Activated CD4-positive, alpha-beta T cell treated with anti-CD3 and anti-CD28 coated beads for 36 hours (primary cell): ENCODE measurements at regions of chr2 and their contacts with region 1.

Region 1: DNA sequence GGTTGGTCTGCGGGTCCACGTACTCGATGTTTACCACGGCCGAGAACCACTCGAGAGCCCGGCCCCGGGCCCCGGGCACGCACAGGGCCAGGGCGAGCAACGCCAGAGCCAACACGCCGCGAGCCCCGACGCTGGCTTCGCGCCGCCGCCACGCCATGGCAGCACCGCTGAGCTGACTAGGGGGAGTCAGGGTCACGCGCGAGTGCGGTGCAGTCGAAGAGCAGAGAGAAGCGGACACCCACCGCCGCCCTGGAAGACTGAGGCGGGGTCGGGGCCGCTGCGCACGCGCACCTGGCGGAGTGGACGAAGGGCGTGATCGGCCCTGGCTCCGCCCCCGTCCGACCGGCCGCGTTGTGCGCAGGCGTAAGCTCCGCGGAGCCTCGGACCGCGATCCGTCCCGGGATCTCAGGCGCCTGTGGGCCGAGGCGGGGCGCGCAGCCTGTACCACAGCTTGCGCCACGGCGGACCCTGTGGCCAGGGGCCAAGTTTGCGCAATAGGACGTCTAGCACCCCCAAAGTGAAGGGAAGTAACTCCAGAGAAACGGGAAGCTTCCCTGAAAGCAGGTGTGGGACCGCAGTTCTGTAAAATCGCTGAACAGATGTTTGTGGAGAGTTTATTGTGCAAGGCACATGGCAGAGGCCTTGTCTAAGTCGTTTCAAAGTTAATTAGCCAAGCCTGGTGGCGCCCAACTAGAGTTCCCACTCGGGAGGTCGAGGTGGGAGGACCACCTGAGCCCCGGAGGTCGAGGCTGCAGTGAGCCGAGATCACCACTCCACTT is at the start of gene RNF149:
- DNase-seq: peak; percentile 94
- ATAC-seq: peak; percentile 63
- H3K4me3 Mint-ChIP-seq: peak within 1 kb of the TSS; percentile 82
- H3K27ac Mint-ChIP-seq: peak within 1 kb of the TSS; percentile 98
- H3K4me1 Mint-ChIP-seq: peaks cover 67% of the 10 kb centered on the region
- H3K27me3 Mint-ChIP-seq: no peaks in the 10 kb centered on the region
- total RNA-seq, gene RNF149: 23.4 to 29.5 TPM

Region 2: GRCh38 chr2:100562732-100563720 is 745.6 kb before region 1 on chr2 and contains the start of gene PDCL3:
- CTCF ChIA-PET with region 1: no interaction called
- POLR2A ChIA-PET with region 1: no interaction called
- intact Hi-C with region 1: loop called in 1 of 2 experiments (anchors 5 kb)
- DNase-seq: peak; percentile 96
- ATAC-seq: peak; percentile 96
- H3K4me3 Mint-ChIP-seq: peak within 1 kb of the TSS; percentile 85
- H3K27ac Mint-ChIP-seq: peak within 1 kb of the TSS; percentile 97
- H3K4me1 Mint-ChIP-seq: peaks cover 26% of the 10 kb centered on the region
- H3K27me3 Mint-ChIP-seq: no peaks in the 10 kb centered on the region
- total RNA-seq, gene PDCL3: 39.3 to 41.9 TPM

Region 3: DNA sequence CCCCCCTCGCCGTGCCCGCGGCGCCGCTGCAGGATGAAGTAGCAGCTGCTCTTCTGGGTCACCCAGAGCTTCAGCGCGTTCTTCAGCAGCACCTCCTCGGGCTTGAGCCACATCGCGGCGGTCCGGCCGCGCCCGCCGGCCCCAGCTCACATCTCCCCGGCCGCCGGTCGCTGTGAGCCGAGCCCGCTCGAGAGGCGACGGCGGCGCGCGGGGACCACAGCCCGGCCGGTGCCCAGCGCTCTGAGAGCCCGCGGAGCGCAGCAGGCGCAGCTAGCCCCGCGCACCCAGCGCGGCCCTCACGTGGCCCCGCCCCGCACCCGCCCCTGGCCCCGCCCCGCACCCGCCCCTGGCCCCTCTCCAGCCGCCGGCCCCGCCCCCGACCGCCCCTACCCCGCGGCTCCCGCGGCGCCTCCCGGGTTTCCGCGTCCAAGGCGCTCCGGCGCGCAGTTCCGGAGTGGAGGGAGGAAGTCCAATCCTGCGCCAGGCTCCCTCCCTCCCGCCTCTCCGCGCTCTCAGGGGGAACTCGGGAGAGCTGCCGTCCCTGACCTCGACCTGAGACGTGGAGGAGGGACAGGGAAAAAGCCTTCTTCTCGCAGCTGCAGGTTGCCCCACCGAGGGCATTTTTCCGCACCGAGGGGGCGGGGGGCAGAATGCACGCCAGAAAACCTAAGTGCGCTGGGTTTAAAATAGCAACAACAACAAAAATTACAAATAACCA is 157.3 kb before region 1 on chr2 and contains the start of gene TBC1D8:
- CTCF ChIA-PET with region 1: no interaction called
- POLR2A ChIA-PET with region 1: no interaction called
- intact Hi-C with region 1: loop called in 1 of 2 experiments (anchors 1 kb)
- DNase-seq: peak; percentile 82
- ATAC-seq: peak; percentile 93
- H3K4me3 Mint-ChIP-seq: peak within 1 kb of the TSS; percentile 71
- H3K27ac Mint-ChIP-seq: peak within 1 kb of the TSS; percentile 55
- H3K4me1 Mint-ChIP-seq: peaks cover 24% of the 10 kb centered on the region
- H3K27me3 Mint-ChIP-seq: peaks cover 21% of the 10 kb centered on the region
- total RNA-seq, gene TBC1D8: 3.3 to 3.4 TPM

Region 4: DNA sequence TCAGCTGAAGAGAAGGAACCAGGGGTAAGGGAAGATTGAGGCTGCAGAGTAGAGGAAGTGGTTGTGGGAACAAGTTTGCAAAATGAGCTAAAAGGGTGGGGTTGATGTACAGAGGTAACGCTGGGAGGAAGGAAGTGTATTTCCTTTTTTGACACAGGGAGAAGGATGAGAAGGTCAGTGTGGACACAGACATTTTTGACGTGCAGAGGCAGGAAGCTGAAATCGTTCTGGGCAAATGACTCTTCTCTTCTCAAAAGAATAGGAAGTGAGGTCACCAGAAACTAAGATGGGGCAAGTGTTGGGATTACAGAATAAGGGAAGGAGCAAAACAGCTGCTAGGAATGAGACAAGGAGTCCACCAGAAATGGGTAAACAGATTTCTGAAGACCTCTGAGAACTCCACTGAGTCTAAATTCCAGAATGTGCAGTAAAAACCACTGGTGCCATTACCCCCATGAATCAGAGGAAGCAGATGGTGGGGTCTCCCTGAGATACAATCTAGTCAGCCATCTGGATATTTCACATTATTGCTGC is 19.9 kb after region 1 on chr2:
- CTCF ChIA-PET with region 1: interaction called, 4 read pairs
- POLR2A ChIA-PET with region 1: interaction called, 4 read pairs
- intact Hi-C with region 1: loop called (anchors 1 to 2 kb)
- DNase-seq: no peak
- ATAC-seq: peak; percentile 80
- H3K4me3 Mint-ChIP-seq: no peak overlapping the region
- H3K27ac Mint-ChIP-seq: no peak overlapping the region
- H3K4me1 Mint-ChIP-seq: peaks cover 20% of the 10 kb centered on the region
- H3K27me3 Mint-ChIP-seq: no peaks in the 10 kb centered on the region

Region 5: DNA sequence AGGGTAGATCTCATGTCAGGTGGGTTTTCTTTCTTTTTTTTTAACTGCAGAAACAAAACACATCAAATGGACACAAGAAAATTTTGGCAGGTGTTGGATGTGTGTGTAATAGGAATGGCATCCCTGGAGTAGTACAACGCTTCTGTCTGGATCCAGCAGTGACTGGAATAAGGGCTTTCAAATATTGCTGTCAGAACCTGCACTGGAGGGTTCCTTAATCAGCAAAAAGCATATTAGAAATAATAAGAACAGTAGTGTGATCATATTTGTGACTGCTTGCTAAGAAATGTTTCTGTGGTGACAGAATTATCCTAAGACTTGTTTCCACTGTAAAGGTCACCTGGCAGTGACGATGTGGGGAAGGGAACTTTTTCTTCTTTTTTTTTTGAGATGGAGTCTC is 47.9 kb after region 1 on chr2:
- CTCF ChIA-PET with region 1: no interaction called
- POLR2A ChIA-PET with region 1: no interaction called
- intact Hi-C with region 1: no loop called
- DNase-seq: no peak
- ATAC-seq: no peak
- H3K4me3 Mint-ChIP-seq: no peak overlapping the region
- H3K27ac Mint-ChIP-seq: no peak overlapping the region
- H3K4me1 Mint-ChIP-seq: peaks cover 14% of the 10 kb centered on the region
- H3K27me3 Mint-ChIP-seq: no peaks in the 10 kb centered on the region

Region 6: GRCh38 chr2:101387151-101387807 is 78.7 kb after region 1 on chr2 and contains the start of gene CREG2:
- CTCF ChIA-PET with region 1: no interaction called
- POLR2A ChIA-PET with region 1: no interaction called
- intact Hi-C with region 1: no loop called
- DNase-seq: peak; percentile 81
- ATAC-seq: peak; percentile 93
- H3K4me3 Mint-ChIP-seq: peak within 1 kb of the TSS; percentile 55
- H3K27ac Mint-ChIP-seq: no peak within 1 kb of the TSS
- H3K4me1 Mint-ChIP-seq: peaks cover 6% of the 10 kb centered on the region
- H3K27me3 Mint-ChIP-seq: peaks cover 34% of the 10 kb centered on the region
- total RNA-seq, gene CREG2: not detected

Region 7: GRCh38 chr2:101623031-101623521 is 314.5 kb after region 1 on chr2:
- CTCF ChIA-PET with region 1: no interaction called
- POLR2A ChIA-PET with region 1: no interaction called
- intact Hi-C with region 1: no loop called
- DNase-seq: no peak
- ATAC-seq: peak; percentile 67
- H3K4me3 Mint-ChIP-seq: peak overlapping the region; percentile 28
- H3K27ac Mint-ChIP-seq: peak overlapping the region; percentile 83
- H3K4me1 Mint-ChIP-seq: peaks cover 34% of the 10 kb centered on the region
- H3K27me3 Mint-ChIP-seq: no peaks in the 10 kb centered on the region

Region 8: GRCh38 chr2:101704046-101704466 is 395.4 kb after region 1 on chr2:
- CTCF ChIA-PET with region 1: no interaction called
- POLR2A ChIA-PET with region 1: no interaction called
- intact Hi-C with region 1: loop called (anchors 2 to 5 kb)
- DNase-seq: peak; percentile 54
- ATAC-seq: peak; percentile 18
- H3K4me3 Mint-ChIP-seq: peak overlapping the region; percentile 53
- H3K27ac Mint-ChIP-seq: peak overlapping the region; percentile 90
- H3K4me1 Mint-ChIP-seq: peaks cover 74% of the 10 kb centered on the region
- H3K27me3 Mint-ChIP-seq: no peaks in the 10 kb centered on the region

Region 9: DNA sequence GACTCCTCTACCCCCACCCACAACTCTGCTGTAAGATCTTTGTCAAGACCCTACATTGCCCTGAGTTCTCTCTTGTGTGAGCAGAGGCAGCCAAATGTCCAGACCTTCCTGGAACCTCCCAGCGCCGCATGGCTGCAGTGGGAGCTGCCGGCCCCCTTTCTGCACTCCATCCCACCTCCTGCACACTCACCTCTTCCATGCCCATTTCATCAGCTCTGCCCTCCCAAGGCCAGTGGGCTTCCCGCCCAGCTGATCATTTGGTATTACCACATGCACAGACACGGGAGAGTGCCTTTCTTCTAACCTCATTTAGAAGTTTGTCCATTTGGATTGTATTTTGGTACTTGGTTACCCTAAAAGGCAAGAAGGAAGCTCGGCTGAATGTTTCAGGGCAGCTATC is 685.2 kb after region 1 on chr2:
- CTCF ChIA-PET with region 1: no interaction called
- POLR2A ChIA-PET with region 1: no interaction called
- intact Hi-C with region 1: no loop called
- DNase-seq: no peak
- ATAC-seq: no peak
- H3K4me3 Mint-ChIP-seq: no peak overlapping the region
- H3K27ac Mint-ChIP-seq: peak overlapping the region; percentile 4
- H3K4me1 Mint-ChIP-seq: peaks cover 18% of the 10 kb centered on the region
- H3K27me3 Mint-ChIP-seq: peaks cover 14% of the 10 kb centered on the region

Region 10: GRCh38 chr2:102063941-102064678 is 755.5 kb after region 1 on chr2:
- CTCF ChIA-PET with region 1: no interaction called
- POLR2A ChIA-PET with region 1: no interaction called
- intact Hi-C with region 1: loop called in 1 of 2 experiments (anchors 2 kb)
- DNase-seq: peak; percentile 77
- ATAC-seq: peak; percentile 35
- H3K4me3 Mint-ChIP-seq: no peak overlapping the region
- H3K27ac Mint-ChIP-seq: peak overlapping the region; percentile 86
- H3K4me1 Mint-ChIP-seq: peaks cover 38% of the 10 kb centered on the region
- H3K27me3 Mint-ChIP-seq: no peaks in the 10 kb centered on the region